ENCODE measurements at regions of chr9 and their contacts with region 1.

Region 1: GRCh38 chr9:119114681-119115080 is 254.6 kb downstream of the BRINP1 start:
- DNase-seq: no peak
- H3K4me3 Mint-ChIP-seq: no peak overlapping the region
- H3K27ac Mint-ChIP-seq: no peak overlapping the region
- H3K4me1 Mint-ChIP-seq: no peaks in the 10 kb centered on the region
- H3K27me3 Mint-ChIP-seq: no peaks in the 10 kb centered on the region

Region 2: GRCh38 chr9:118891213-118891612 is 223.5 kb before region 1 on chr9:
- intact Hi-C with region 1: no loop called
- DNase-seq: no peak
- H3K4me3 Mint-ChIP-seq: no peak overlapping the region
- H3K27ac Mint-ChIP-seq: no peak overlapping the region
- H3K4me1 Mint-ChIP-seq: no peaks in the 10 kb centered on the region
- H3K27me3 Mint-ChIP-seq: no peaks in the 10 kb centered on the region

Region 3: GRCh38 chr9:119074017-119074416 is 40.7 kb before region 1 on chr9:
- intact Hi-C with region 1: loop called (anchors 1 kb)
- DNase-seq: no peak
- H3K4me3 Mint-ChIP-seq: no peak overlapping the region
- H3K27ac Mint-ChIP-seq: no peak overlapping the region
- H3K4me1 Mint-ChIP-seq: no peaks in the 10 kb centered on the region
- H3K27me3 Mint-ChIP-seq: no peaks in the 10 kb centered on the region

Region 4: GRCh38 chr9:120412425-120412951 is 1297.8 kb after region 1 on chr9:
- intact Hi-C with region 1: no loop called
- DNase-seq: no peak
- H3K4me3 Mint-ChIP-seq: no peak overlapping the region
- H3K27ac Mint-ChIP-seq: no peak overlapping the region
- H3K4me1 Mint-ChIP-seq: no peaks in the 10 kb centered on the region
- H3K27me3 Mint-ChIP-seq: no peaks in the 10 kb centered on the region

Measured in activated T-helper 1 cell treated with anti-CD3 and anti-CD28 coated beads, Interleukin-12 subunit alpha, Interleukin-12 subunit beta, Interleukin-2, Interleukin-4 antibody, amounts not matched to agents 30 ng/mL and 10 ng/mL and 1 ng/mL, durations not matched to agents 14 hours and 24 hours and 36 hours (primary cell).